CD4-positive, alpha-beta T cell (primary cell): ENCODE measurements at regions of chr16 and their contacts with region 1.

Region 1: GRCh38 chr16:67109407-67110135 is at the start of gene PHAF1:
- DNase-seq: peak; percentile 92 to 98 (median 96)
- ATAC-seq: peak; percentile 88
- H3K4me3 ChIP-seq: peak within 1 kb of the TSS; percentile 88
- H3K4me3 Mint-ChIP-seq: peak within 1 kb of the TSS; percentile 96
- H3K27ac ChIP-seq: peak within 1 kb of the TSS; percentile 26 to 29
- H3K27ac Mint-ChIP-seq: peak within 1 kb of the TSS; percentile 84
- H3K4me1 ChIP-seq: peaks cover 24% of the 10 kb centered on the region
- H3K4me1 Mint-ChIP-seq: peaks cover 26% of the 10 kb centered on the region
- H3K27me3 ChIP-seq: no peaks in the 10 kb centered on the region
- H3K27me3 Mint-ChIP-seq: no peaks in the 10 kb centered on the region
- CTCF ChIP-seq: no peak
- total RNA-seq, gene PHAF1: 10.6 to 10.8 TPM

Region 2: DNA sequence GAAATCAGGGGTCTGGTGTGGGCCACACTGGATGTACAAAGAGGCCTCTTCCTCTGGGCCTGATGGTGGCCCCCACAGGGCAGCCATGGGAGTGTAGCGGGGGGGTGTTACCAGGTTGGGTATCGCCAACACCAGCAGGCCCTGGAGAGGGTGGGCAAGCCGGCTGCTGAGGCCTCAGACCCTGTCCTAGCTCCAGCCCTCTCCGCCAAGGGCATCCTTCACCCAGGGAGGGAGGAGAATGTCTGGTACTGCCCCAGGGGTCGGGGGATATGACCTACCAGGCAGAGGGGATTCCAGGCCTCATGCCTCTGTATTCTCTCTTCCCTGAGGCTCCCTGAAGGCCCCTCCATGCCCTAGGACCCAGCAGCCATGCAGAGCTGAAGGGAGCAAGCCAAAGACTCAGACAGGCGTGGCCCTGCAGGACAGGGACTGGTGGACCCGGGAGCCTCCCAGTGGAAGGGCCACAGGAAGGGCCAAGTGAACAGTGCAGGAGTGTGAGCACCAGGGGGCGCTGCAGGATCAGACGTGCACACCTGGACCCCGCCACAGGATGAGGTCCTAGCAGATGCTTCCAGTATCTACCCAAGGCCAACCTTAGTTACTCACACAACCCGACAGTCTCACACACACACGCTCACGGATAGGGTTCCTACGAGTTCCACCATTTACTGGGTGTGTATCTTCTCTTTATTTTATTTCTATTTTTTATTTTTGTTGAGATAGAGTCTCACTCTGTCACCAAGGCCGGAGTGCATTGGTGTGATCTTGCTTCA is 132.0 kb before region 1 on chr16:
- CTCF ChIA-PET with region 1: no interaction called
- POLR2A ChIA-PET with region 1: no interaction called
- intact Hi-C with region 1: no loop called
- DNase-seq: peak; percentile 79 to 95 (median 87)
- ATAC-seq: peak; percentile 99
- H3K4me3 ChIP-seq: no peak overlapping the region
- H3K4me3 Mint-ChIP-seq: no peak overlapping the region
- H3K27ac ChIP-seq: no peak overlapping the region
- H3K27ac Mint-ChIP-seq: no peak overlapping the region
- H3K4me1 ChIP-seq: peaks cover 23% of the 10 kb centered on the region
- H3K4me1 Mint-ChIP-seq: peaks cover 5% of the 10 kb centered on the region
- H3K27me3 ChIP-seq: no peaks in the 10 kb centered on the region
- H3K27me3 Mint-ChIP-seq: peaks cover 3% of the 10 kb centered on the region
- CTCF ChIP-seq: peak; percentile 91

Region 3: GRCh38 chr16:67246934-67247697 is 137.5 kb after region 1 on chr16 and contains the start of gene FHOD1:
- CTCF ChIA-PET with region 1: no interaction called
- POLR2A ChIA-PET with region 1: no interaction called
- intact Hi-C with region 1: loop called in 1 of 2 experiments (anchors 5 kb)
- DNase-seq: peak; percentile 86 to 99 (median 96)
- ATAC-seq: peak; percentile 74
- H3K4me3 ChIP-seq: peak within 1 kb of the TSS; percentile 87
- H3K4me3 Mint-ChIP-seq: peak within 1 kb of the TSS; percentile 97
- H3K27ac ChIP-seq: peak within 1 kb of the TSS; percentile 65 to 74
- H3K27ac Mint-ChIP-seq: peak within 1 kb of the TSS; percentile 68
- H3K4me1 ChIP-seq: peaks cover 72% of the 10 kb centered on the region
- H3K4me1 Mint-ChIP-seq: peaks cover 42% of the 10 kb centered on the region
- H3K27me3 ChIP-seq: peaks cover 0 to 6% of the 10 kb centered on the region in 2 experiments
- H3K27me3 Mint-ChIP-seq: peaks cover 13% of the 10 kb centered on the region
- CTCF ChIP-seq: no peak
- total RNA-seq, gene FHOD1: 21.1 to 26.0 TPM